ENCODE measurements at regions of chrX and their contacts with region 1.

Region 1: GRCh38 chrX:79259073-79259689 is 108.0 kb downstream of the ITM2A start:
- DNase-seq: peak; percentile 13 to 89 (median 40)
- ATAC-seq: peak; percentile 86
- H3K4me3 ChIP-seq: peak overlapping the region; percentile 22 to 36
- H3K4me3 Mint-ChIP-seq: peak overlapping the region; percentile 66
- H3K27ac ChIP-seq: peak overlapping the region; percentile 57 to 73
- H3K27ac Mint-ChIP-seq: peak overlapping the region; percentile 94
- H3K4me1 ChIP-seq: peaks cover 75% of the 10 kb centered on the region
- H3K4me1 Mint-ChIP-seq: peaks cover 81% of the 10 kb centered on the region
- H3K27me3 ChIP-seq: no peaks in the 10 kb centered on the region
- H3K27me3 Mint-ChIP-seq: no peaks in the 10 kb centered on the region
- CTCF ChIP-seq: no peak

Region 2: DNA sequence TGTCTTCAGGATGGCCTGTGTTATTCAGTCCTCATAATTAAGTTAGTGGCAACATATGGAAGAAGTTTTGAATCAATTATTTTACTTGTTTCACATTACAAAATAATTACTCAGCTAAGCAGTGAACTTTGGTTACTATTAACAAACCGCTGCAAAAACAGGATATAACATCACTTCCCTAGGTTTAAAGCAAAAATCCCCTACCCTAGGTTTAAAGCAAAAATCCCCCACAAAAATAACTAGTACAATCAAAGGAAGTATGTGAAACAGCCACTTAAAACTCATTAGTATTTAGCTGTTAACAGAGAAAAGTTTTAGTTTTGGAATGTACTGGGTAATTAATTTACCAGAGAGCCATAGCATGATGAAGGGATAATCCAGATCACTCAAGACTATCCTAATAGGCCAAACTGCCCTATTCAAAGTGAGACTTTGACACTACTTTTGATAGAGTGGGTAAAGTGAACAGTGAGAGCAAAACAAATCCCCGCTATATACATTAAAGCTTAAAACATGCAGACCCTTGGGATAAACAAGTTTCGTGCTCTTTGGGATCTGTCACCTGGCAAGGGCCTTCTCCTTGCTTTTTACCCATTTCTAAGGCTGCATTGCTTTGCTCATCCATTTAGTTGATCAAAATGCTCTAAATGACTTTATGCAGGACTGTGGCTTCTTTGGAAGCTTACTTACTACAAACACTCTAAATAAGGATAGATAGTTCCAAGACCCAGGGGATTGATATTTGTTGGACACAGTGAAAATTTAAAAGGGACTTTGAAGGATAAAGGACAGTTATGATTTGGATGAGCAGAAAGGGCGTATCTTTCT is 151.1 kb before region 1 on chrX:
- CTCF ChIA-PET with region 1: no interaction called
- POLR2A ChIA-PET with region 1: interaction called, 4 read pairs
- intact Hi-C with region 1: loop called in 1 of 2 experiments (anchors 5 kb)
- DNase-seq: peak in 2 of 9 experiments; percentile 69 to 84
- ATAC-seq: peak; percentile 89
- H3K4me3 ChIP-seq: peak overlapping the region; percentile 15 to 20
- H3K4me3 Mint-ChIP-seq: peak overlapping the region; percentile 68
- H3K27ac ChIP-seq: peak overlapping the region; percentile 80 to 99
- H3K27ac Mint-ChIP-seq: peak overlapping the region; percentile 98
- H3K4me1 ChIP-seq: peaks cover 59% of the 10 kb centered on the region
- H3K4me1 Mint-ChIP-seq: peaks cover 57% of the 10 kb centered on the region
- H3K27me3 ChIP-seq: no peaks in the 10 kb centered on the region
- H3K27me3 Mint-ChIP-seq: no peaks in the 10 kb centered on the region
- CTCF ChIP-seq: no peak

Region 3: DNA sequence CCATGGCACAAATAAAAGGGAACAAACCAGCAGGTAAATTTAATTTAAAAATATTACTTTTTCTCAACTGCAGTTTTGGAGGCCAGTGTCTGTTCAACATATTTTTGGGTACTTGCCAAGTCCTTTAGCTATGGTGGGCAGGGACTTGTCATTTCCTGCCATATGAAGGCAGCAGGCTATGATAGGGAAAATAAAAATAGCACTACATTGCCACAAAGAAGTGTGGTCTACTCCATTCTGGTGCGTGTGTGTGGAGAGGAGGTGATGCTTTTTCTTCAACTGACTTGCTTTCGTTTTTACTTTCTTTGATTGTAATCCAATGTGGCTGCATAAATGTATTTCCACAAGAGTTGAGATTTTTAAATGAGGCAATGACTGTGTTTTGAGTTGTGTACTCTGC is 97.5 kb before region 1 on chrX:
- CTCF ChIA-PET with region 1: interaction called, 4 read pairs
- POLR2A ChIA-PET with region 1: interaction called, 4 read pairs
- intact Hi-C with region 1: loop called in 1 of 2 experiments (anchors 5 kb)
- DNase-seq: peak in 8 of 9 experiments; percentile 14 to 91 (median 36)
- ATAC-seq: peak; percentile 87
- H3K4me3 ChIP-seq: peak overlapping the region; percentile 27 to 32
- H3K4me3 Mint-ChIP-seq: peak overlapping the region; percentile 85
- H3K27ac ChIP-seq: peak overlapping the region; percentile 58 to 83
- H3K27ac Mint-ChIP-seq: peak overlapping the region; percentile 97
- H3K4me1 ChIP-seq: peaks cover 70% of the 10 kb centered on the region
- H3K4me1 Mint-ChIP-seq: peaks cover 73% of the 10 kb centered on the region
- H3K27me3 ChIP-seq: no peaks in the 10 kb centered on the region
- H3K27me3 Mint-ChIP-seq: no peaks in the 10 kb centered on the region
- CTCF ChIP-seq: no peak

Region 4: DNA sequence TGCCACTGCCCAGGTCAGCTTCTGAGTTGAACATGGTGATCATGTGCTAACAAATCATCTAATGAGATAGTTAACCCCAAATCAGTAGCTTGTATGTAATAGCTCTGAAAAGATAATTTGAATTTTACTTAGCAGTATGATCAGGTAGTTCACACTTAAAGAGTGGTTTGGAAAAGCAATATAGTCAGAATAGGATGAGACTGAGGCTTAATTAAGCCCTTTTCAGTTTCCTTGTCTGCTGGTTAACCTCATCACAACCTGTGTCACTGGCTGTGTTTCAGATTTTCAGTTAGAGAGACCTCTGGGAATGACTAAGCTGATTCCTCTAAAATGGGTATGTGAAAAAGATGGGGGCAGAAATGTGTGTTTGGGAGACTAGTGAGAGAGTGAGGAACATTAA is 76.6 kb before region 1 on chrX:
- CTCF ChIA-PET with region 1: no interaction called
- POLR2A ChIA-PET with region 1: no interaction called
- intact Hi-C with region 1: loop called in 1 of 2 experiments (anchors 5 kb)
- DNase-seq: no peak
- ATAC-seq: peak; percentile 46
- H3K4me3 ChIP-seq: no peak overlapping the region
- H3K4me3 Mint-ChIP-seq: peak overlapping the region; percentile 37
- H3K27ac ChIP-seq: peak overlapping the region in 1 of 2 experiments; percentile 63
- H3K27ac Mint-ChIP-seq: peak overlapping the region; percentile 89
- H3K4me1 ChIP-seq: peaks cover 40% of the 10 kb centered on the region
- H3K4me1 Mint-ChIP-seq: peaks cover 65% of the 10 kb centered on the region
- H3K27me3 ChIP-seq: no peaks in the 10 kb centered on the region
- H3K27me3 Mint-ChIP-seq: no peaks in the 10 kb centered on the region
- CTCF ChIP-seq: no peak

Measured in CD8-positive, alpha-beta T cell (primary cell).